Activated CD4-positive, alpha-beta memory T cell treated with anti-CD3 and anti-CD28 coated beads, Interleukin-2, amount 10 ng/mL, durations not matched to agents 7 days and 5 days (primary cell): ENCODE measurements at regions of chr15 and their contacts with region 1.

Region 1: GRCh38 chr15:39946862-39947261 is 12.9 kb downstream of the EIF2AK4 start:
- DNase-seq: no peak
- H3K4me3 Mint-ChIP-seq: no peak overlapping the region
- H3K27ac Mint-ChIP-seq: no peak overlapping the region
- H3K4me1 Mint-ChIP-seq: peaks cover 26% of the 10 kb centered on the region
- H3K27me3 Mint-ChIP-seq: no peaks in the 10 kb centered on the region

Region 2: GRCh38 chr15:39934397-39935071 is 12.3 kb before region 1 on chr15:
- CTCF ChIA-PET with region 1: interaction called, 5 read pairs
- POLR2A ChIA-PET with region 1: interaction called, 12 read pairs
- DNase-seq: no peak
- H3K4me3 Mint-ChIP-seq: peak overlapping the region; percentile 80
- H3K27ac Mint-ChIP-seq: peak overlapping the region; percentile 57
- H3K4me1 Mint-ChIP-seq: peaks cover 37% of the 10 kb centered on the region
- H3K27me3 Mint-ChIP-seq: peaks cover 9% of the 10 kb centered on the region